ENCODE measurements at regions of chr7 and their contacts with region 1.

Region 1: DNA sequence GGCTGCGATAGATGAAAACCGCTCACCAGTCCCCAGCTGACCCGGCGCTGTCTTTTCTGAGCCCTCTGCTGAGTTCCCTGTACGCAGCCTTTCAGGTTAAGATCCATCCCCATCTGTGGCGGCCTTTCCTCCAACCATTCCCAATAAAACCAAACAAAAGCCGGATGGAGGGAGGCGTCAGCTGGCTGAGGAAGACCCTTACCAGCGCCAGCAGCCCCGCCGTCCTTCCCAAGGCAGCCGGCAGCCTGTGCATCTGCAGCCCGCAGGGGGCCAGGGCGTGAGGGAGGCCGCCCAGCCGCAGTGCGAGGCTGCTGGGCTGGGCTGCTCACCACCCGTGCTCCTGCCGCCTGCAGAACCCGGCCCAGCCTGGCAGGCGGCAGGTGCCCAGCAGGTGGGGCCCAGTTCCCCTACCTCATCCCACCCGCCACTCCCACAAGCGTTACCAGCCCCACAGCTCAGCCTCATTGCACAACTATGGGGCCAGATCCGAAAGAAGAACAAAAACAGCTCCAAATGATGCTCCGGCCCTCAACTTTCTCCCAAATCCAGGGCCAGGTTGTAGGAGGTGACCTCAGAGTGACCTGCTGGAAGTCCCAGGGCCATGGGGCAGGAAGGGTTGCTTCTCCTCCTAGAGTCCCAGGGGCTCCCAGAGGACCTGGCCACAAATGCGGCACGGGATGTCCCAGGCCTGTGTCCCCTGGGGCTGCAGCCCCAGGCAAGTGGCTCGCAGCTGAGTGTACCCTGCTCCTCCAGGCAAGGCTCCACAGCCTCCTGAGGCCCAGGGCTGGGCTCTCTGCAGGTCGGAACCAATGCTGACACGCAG is 23.8 kb downstream of the PAPOLB start:
- DNase-seq: peak; percentile 77
- H3K4me3 ChIP-seq: no peak overlapping the region
- H3K27ac ChIP-seq: peak overlapping the region in 1 of 2 experiments; percentile 12; a peak in 1 of 4 replicates
- H3K4me1 ChIP-seq: peaks cover 0 to 32% of the 10 kb centered on the region in 2 experiments; a peak in 1 of 4 replicates
- H3K27me3 ChIP-seq: no peaks in the 10 kb centered on the region
- CTCF ChIP-seq: no peak
- EP300 ChIP-seq: no peak
- RAD21 ChIP-seq: no peak

Region 2: DNA sequence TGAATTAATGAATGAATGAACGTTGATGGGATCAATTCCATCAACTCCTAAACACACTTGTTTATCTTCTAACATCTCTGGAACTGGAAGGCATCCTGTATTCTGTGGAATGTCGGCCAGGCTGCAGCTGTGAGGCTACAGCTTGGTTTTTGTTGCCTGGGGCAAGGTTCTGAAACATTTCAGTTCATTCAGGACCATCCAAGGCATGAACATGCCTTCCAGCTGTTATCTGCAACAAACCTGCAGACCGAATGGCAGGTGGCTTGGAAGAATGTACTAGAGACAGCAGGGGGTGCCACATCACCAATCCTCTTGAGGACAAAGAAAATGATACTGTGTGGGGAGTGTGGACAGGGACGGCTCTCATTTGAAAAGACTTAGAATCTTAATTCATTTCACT is 11.4 kb after region 1 on chr7:
- CTCF ChIA-PET with region 1: interaction called, 198 read pairs
- POLR2A ChIA-PET with region 1: no interaction called
- DNase-seq: peak; percentile 81
- H3K4me3 ChIP-seq: no peak overlapping the region
- H3K27ac ChIP-seq: peak overlapping the region in 1 of 2 experiments; percentile 5; a peak in 1 of 4 replicates
- H3K4me1 ChIP-seq: peaks cover 0 to 19% of the 10 kb centered on the region in 2 experiments; a peak in 2 of 4 replicates
- H3K27me3 ChIP-seq: no peaks in the 10 kb centered on the region
- CTCF ChIP-seq: peak; percentile 51
- EP300 ChIP-seq: peak in 1 of 2 experiments; percentile 45; a peak in 1 of 4 replicates
- RAD21 ChIP-seq: peak; percentile 95

Region 3: GRCh38 chr7:4939971-4940728 is 102.1 kb after region 1 on chr7:
- CTCF ChIA-PET with region 1: no interaction called
- POLR2A ChIA-PET with region 1: no interaction called
- DNase-seq: no peak
- H3K4me3 ChIP-seq: no peak overlapping the region
- H3K27ac ChIP-seq: no peak overlapping the region
- H3K4me1 ChIP-seq: no peaks in the 10 kb centered on the region
- H3K27me3 ChIP-seq: no peaks in the 10 kb centered on the region; the same call in 1 of the 2 replicates
- CTCF ChIP-seq: no peak
- EP300 ChIP-seq: no peak
- RAD21 ChIP-seq: no peak

Region 4: GRCh38 chr7:5064391-5065106 is 226.5 kb after region 1 on chr7:
- CTCF ChIA-PET with region 1: no interaction called
- POLR2A ChIA-PET with region 1: no interaction called
- DNase-seq: no peak
- H3K4me3 ChIP-seq: peak overlapping the region in 1 of 2 experiments; percentile 18; a peak in 1 of 4 replicates
- H3K27ac ChIP-seq: no peak overlapping the region
- H3K4me1 ChIP-seq: no peaks in the 10 kb centered on the region
- H3K27me3 ChIP-seq: no peaks in the 10 kb centered on the region
- CTCF ChIP-seq: no peak
- EP300 ChIP-seq: no peak
- RAD21 ChIP-seq: no peak